ENCODE measurements at regions of chr10 and their contacts with region 1.

Region 1: DNA sequence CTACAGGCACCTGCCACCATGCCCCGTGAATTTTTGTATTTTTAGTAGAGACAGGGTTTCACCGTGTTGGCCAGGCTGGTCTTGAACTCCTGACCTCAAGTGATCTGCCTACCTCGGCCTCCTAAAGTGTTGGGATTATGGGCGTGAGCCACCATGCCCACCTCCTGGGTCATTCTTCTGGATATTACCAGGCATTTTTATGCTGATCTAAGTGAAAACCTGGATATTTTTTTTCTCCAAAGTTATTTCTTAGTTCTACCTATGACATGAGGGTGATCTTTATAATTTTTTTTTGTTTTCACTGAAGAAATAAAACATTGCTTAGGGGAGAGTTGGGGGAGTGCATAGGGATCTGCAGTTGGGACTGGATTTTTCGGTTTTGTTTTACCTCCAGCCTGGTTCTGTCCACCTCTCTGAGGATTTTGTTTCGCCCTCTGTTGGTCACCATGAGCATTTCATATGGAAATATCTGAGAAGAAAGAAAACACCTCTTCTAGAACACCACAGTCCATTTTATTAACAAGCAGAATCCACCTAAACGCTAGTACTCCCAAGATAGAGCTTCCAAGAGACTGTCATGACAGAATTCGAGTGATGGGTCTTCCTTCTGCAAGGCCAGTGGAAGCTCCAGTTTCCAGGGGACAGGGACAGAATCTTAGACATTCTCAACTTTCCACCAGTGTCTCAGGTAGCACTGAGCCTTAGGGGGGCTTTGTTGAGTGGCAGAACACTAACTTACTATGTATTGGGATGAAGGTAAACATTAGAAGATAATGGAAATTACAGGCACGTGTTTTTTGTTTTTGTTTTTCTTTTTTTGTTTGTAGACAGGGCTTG is 33.4 kb upstream of the AFAP1L2 start:
- DNase-seq: no peak
- H3K4me3 ChIP-seq: no peak overlapping the region
- H3K27ac ChIP-seq: no peak overlapping the region
- H3K4me1 ChIP-seq: no peaks in the 10 kb centered on the region
- H3K27me3 ChIP-seq: no peaks in the 10 kb centered on the region
- CTCF ChIP-seq: peak; percentile 37 to 50

Region 2: GRCh38 chr10:114304017-114304570 is 133.6 kb before region 1 on chr10:
- intact Hi-C with region 1: loop called (anchors 5 kb)
- DNase-seq: peak; percentile 84 to 90
- H3K4me3 ChIP-seq: peak overlapping the region; percentile 36 to 39
- H3K27ac ChIP-seq: peak overlapping the region; percentile 54 to 57
- H3K4me1 ChIP-seq: peaks cover 0 to 53% (median 25%) of the 10 kb centered on the region in 4 donors
- H3K27me3 ChIP-seq: no peaks in the 10 kb centered on the region
- CTCF ChIP-seq: peak; percentile 75 to 82